ENCODE measurements at regions of chr14 and their contacts with region 1.

Region 1: GRCh38 chr14:73851644-73852382 is at the start of gene PTGR2:
- DNase-seq: peak; percentile 98 to 99
- ATAC-seq: peak; percentile 92 to 94
- H3K4me3 ChIP-seq: peak within 1 kb of the TSS; percentile 74
- H3K27ac ChIP-seq: peak within 1 kb of the TSS; percentile 93 to 94
- H3K4me1 ChIP-seq: peaks cover 27% of the 10 kb centered on the region
- CTCF ChIP-seq: no peak
- EP300 ChIP-seq: no peak
- POLR2A ChIP-seq: peak; percentile 83
- RAD21 ChIP-seq: 0 out of 5 replicates have a peak, but pooled peaks of 1 of the 2 experiments have one; percentile 9
- polyA plus RNA-seq, gene PTGR2: 17.7 and 30.5 TPM in 2 replicates

Region 2: GRCh38 chr14:73785873-73786695 is 65.7 kb before region 1 on chr14:
- CTCF ChIA-PET with region 1: no interaction called
- POLR2A ChIA-PET with region 1: interaction called, 20 read pairs
- DNase-seq: peak; percentile 60 to 88
- ATAC-seq: peak; percentile 86 to 90
- H3K4me3 ChIP-seq: peak overlapping the region; percentile 79
- H3K27ac ChIP-seq: peak overlapping the region; percentile 95 to 100
- H3K4me1 ChIP-seq: peaks cover 33% of the 10 kb centered on the region
- CTCF ChIP-seq: no peak
- EP300 ChIP-seq: no peak
- POLR2A ChIP-seq: peak; percentile 36; the same call in 1 of the 2 replicates
- RAD21 ChIP-seq: 0 out of 5 replicates have a peak, but pooled peaks of 1 of the 2 experiments have one; percentile 23

Region 3: DNA sequence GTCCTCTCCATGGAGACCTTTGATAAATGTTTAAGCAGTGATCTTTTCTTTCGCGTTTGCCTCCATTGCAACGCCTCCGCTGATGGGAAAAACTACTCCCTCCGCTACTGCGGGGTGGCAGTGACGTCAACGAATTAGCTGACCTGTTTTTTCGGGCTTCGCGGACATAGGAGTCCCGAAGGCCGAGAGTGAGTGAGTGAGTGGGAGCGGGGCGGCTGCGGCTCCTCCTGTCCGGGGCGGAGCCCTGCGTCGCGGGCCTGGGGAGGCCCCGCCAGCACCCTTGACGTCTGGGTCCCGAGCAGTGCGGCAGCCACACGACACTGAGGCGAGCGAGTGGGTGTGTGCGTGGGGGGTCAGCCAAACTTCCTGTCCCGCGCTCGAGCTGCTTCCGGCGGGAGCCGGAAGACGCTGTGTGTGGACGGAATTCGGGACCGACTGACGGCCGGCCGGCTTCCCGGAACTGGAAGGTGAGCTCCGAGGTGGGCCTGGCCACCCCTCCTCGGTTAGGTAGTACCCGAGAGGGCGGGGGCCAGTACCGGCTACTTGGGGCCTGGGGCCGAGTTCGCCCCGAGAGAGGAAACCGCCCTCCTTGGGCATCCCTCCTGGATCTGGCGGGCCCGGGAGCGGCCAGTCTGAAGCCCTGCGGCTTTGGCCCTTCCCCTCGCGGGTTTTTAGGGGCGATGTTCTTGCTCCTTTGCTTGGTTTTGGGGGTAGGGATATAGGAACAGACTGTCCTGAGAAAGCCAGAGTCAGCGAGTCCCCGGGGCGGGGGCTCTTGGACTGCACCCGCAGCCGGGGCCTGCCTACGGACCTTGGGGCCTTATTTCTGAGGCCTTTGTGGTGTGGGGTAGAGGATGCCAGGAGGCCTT is 34.9 kb after region 1 on chr14 and contains the start of gene ZNF410:
- CTCF ChIA-PET with region 1: no interaction called
- POLR2A ChIA-PET with region 1: interaction called, 18 read pairs
- DNase-seq: peak; percentile 92 to 97
- ATAC-seq: peak; percentile 99
- H3K4me3 ChIP-seq: peak within 1 kb of the TSS; percentile 73
- H3K27ac ChIP-seq: peak within 1 kb of the TSS; percentile 82 to 96
- H3K4me1 ChIP-seq: peaks cover 20% of the 10 kb centered on the region
- CTCF ChIP-seq: no peak
- EP300 ChIP-seq: no peak
- POLR2A ChIP-seq: peak; percentile 41
- RAD21 ChIP-seq: no peak; a peak in 1 of 5 replicates
- polyA plus RNA-seq, gene ZNF410: 70.8 and 87.7 TPM in 2 replicates

Region 4: DNA sequence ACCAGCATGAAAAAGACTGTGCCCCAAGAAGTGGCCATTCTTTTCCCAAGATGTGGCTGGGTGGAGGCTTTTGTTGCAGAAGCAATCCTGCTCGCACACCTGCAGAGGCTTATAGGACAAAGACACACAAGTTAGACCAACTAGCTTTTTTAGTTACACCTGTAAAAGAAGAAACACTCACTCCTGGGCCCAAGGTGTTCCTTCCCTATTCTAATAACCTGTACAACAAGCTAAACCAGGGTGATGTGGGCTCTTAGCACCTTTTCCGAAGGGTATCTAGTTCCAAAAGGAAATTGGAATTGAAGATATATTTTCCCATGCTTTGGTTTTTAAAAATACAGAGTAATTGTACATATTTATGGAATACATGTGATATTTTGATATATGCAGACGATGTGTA is 136.3 kb after region 1 on chr14:
- CTCF ChIA-PET with region 1: no interaction called
- POLR2A ChIA-PET with region 1: no interaction called
- DNase-seq: no peak
- ATAC-seq: no peak
- H3K4me3 ChIP-seq: no peak overlapping the region
- H3K27ac ChIP-seq: no peak overlapping the region
- H3K4me1 ChIP-seq: no peaks in the 10 kb centered on the region
- CTCF ChIP-seq: no peak
- EP300 ChIP-seq: no peak
- POLR2A ChIP-seq: no peak
- RAD21 ChIP-seq: no peak

Measured in A549 (cell line).